Naive thymus-derived CD4-positive, alpha-beta T cell (primary cell): ENCODE measurements at regions of chr17 and their contacts with region 1.

Region 1: GRCh38 chr17:69282002-69282401 is 44.9 kb downstream of the ABCA5 start:
- DNase-seq: no peak
- ATAC-seq: no peak
- H3K4me3 ChIP-seq: no peak overlapping the region
- H3K4me3 Mint-ChIP-seq: no peak overlapping the region
- H3K27ac ChIP-seq: no peak overlapping the region
- H3K27ac Mint-ChIP-seq: peak overlapping the region in 1 of 9 donors; percentile 32
- H3K4me1 ChIP-seq: no peaks in the 10 kb centered on the region
- H3K4me1 Mint-ChIP-seq: no peaks in the 10 kb centered on the region
- H3K27me3 ChIP-seq: no peaks in the 10 kb centered on the region
- H3K27me3 Mint-ChIP-seq: no peaks in the 10 kb centered on the region

Region 2: GRCh38 chr17:69320210-69320907 is 38.4 kb after region 1 on chr17:
- CTCF ChIA-PET with region 1: no interaction called
- POLR2A ChIA-PET with region 1: no interaction called
- intact Hi-C with region 1: loop called in 1 of 2 experiments (anchors 5 kb)
- DNase-seq: no peak
- ATAC-seq: no peak
- H3K4me3 ChIP-seq: no peak overlapping the region
- H3K4me3 Mint-ChIP-seq: no peak overlapping the region
- H3K27ac ChIP-seq: no peak overlapping the region
- H3K27ac Mint-ChIP-seq: no peak overlapping the region
- H3K4me1 ChIP-seq: no peaks in the 10 kb centered on the region
- H3K4me1 Mint-ChIP-seq: peaks cover 10 to 50% (median 32%) of the 10 kb centered on the region in 7 donors
- H3K27me3 ChIP-seq: no peaks in the 10 kb centered on the region
- H3K27me3 Mint-ChIP-seq: no peaks in the 10 kb centered on the region